PC-9 (cell line): ENCODE measurements at regions of chr3 and their contacts with region 1.

Region 1: DNA sequence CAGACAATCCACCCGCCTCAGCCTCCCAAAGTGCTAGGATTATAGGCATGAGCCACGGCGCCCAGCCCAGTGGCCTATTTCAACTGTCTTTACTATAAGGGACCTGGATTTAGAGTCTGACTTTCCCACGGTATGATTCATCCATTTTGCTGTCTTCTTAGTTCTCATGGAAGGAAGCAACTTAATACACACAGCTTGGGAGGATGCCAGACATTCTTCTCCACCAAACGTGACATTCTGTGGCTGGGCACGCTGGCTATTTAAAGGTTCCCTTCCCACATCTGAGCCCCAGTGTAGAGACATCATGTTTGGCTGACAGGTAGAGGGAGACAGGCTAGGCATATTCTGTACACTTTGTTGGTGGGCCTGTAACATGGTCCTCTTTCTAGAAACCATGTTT is 26.2 kb downstream of the FAM43A start:
- DNase-seq: peak; percentile 89 to 99
- H3K4me3 ChIP-seq: no peak overlapping the region
- H3K27ac ChIP-seq: peak overlapping the region; percentile 54
- H3K4me1 ChIP-seq: peaks cover 47% of the 10 kb centered on the region
- H3K27me3 ChIP-seq: no peaks in the 10 kb centered on the region
- CTCF ChIP-seq: no peak

Region 2: GRCh38 chr3:194623449-194624290 is 88.2 kb before region 1 on chr3:
- CTCF ChIA-PET with region 1: no interaction called
- POLR2A ChIA-PET with region 1: interaction called, 25 read pairs
- intact Hi-C with region 1: no loop called
- DNase-seq: no peak
- H3K4me3 ChIP-seq: no peak overlapping the region
- H3K27ac ChIP-seq: no peak overlapping the region
- H3K4me1 ChIP-seq: no peaks in the 10 kb centered on the region
- H3K27me3 ChIP-seq: no peaks in the 10 kb centered on the region
- CTCF ChIP-seq: no peak

Region 3: GRCh38 chr3:194769020-194769643 is 57.2 kb after region 1 on chr3:
- CTCF ChIA-PET with region 1: no interaction called
- POLR2A ChIA-PET with region 1: interaction called, 9 read pairs
- intact Hi-C with region 1: loop called (anchors 1 kb)
- DNase-seq: peak; percentile 96 to 97
- H3K4me3 ChIP-seq: peak overlapping the region; percentile 50; the same call in 1 of the 2 replicates
- H3K27ac ChIP-seq: no peak overlapping the region
- H3K4me1 ChIP-seq: peaks cover 26% of the 10 kb centered on the region
- H3K27me3 ChIP-seq: no peaks in the 10 kb centered on the region
- CTCF ChIP-seq: 0 out of 2 replicates have a peak, but pooled peaks have one; percentile 28